ENCODE measurements at regions of chr11 and their contacts with region 1.

Region 1: GRCh38 chr11:58654079-58654907 is 31.8 kb downstream of the CNTF start:
- DNase-seq: peak; percentile 63 to 72 (median 66)
- H3K4me3 ChIP-seq: no peak overlapping the region
- H3K4me3 Mint-ChIP-seq: no peak overlapping the region
- H3K27ac ChIP-seq: no peak overlapping the region
- H3K27ac Mint-ChIP-seq: peak overlapping the region in 1 of 7 donors; percentile 11
- H3K4me1 ChIP-seq: no peaks in the 10 kb centered on the region
- H3K4me1 Mint-ChIP-seq: peaks cover 0 to 2% (median under 1%) of the 10 kb centered on the region in 4 donors
- H3K27me3 ChIP-seq: no peaks in the 10 kb centered on the region
- H3K27me3 Mint-ChIP-seq: peaks cover 0 to 5% of the 10 kb centered on the region in 2 donors

Region 2: GRCh38 chr11:58675334-58676155 is 21.3 kb after region 1 on chr11:
- CTCF ChIA-PET with region 1: interaction called, 13 read pairs
- POLR2A ChIA-PET with region 1: no interaction called
- intact Hi-C with region 1: loop called (anchors 1 kb)
- DNase-seq: peak; percentile 46 to 64 (median 58)
- H3K4me3 ChIP-seq: no peak overlapping the region
- H3K4me3 Mint-ChIP-seq: no peak overlapping the region
- H3K27ac ChIP-seq: no peak overlapping the region
- H3K27ac Mint-ChIP-seq: no peak overlapping the region
- H3K4me1 ChIP-seq: no peaks in the 10 kb centered on the region
- H3K4me1 Mint-ChIP-seq: no peaks in the 10 kb centered on the region
- H3K27me3 ChIP-seq: peaks cover 5% of the 10 kb centered on the region
- H3K27me3 Mint-ChIP-seq: peaks cover 0 to 4% of the 10 kb centered on the region in 2 donors

Region 3: DNA sequence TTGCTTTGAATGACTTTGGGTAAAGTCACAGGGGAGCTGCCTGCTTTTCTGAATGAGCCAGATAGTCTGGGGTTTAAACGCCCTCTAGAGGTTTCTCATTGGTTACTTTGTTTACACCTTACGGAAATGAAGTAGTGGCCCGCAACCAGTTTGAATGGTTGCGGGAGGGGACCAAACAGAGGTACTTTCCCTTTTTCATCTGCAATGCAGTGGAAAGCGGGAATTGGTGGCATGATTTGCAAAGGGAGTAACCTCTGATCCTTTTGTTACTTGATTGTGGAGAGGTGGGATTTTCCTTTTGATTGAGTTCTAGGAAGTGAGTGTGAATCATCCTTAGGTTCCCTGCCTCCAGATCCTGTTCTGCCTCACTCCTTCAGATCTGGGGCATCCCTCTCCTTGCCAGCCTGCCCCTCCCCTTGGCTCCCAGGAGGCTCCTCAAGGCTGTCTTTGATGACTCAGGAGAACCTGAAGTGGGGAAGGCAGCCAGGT is 269.1 kb after region 1 on chr11:
- CTCF ChIA-PET with region 1: no interaction called
- POLR2A ChIA-PET with region 1: no interaction called
- intact Hi-C with region 1: loop called (anchors 10 kb)
- DNase-seq: no peak
- H3K4me3 ChIP-seq: no peak overlapping the region
- H3K4me3 Mint-ChIP-seq: peak overlapping the region in 6 of 8 donors; percentile 13 to 73 (median 36)
- H3K27ac ChIP-seq: no peak overlapping the region
- H3K27ac Mint-ChIP-seq: no peak overlapping the region
- H3K4me1 ChIP-seq: no peaks in the 10 kb centered on the region
- H3K4me1 Mint-ChIP-seq: peaks cover 14 to 19% (median 17%) of the 10 kb centered on the region in 4 donors
- H3K27me3 ChIP-seq: peaks cover 15% of the 10 kb centered on the region
- H3K27me3 Mint-ChIP-seq: peaks cover 5 to 7% of the 10 kb centered on the region in 2 donors